K562 (cell line): ENCODE measurements at regions of chr6 and their contacts with region 1.

Region 1: GRCh38 chr6:158047127-158047518 is 65.5 kb downstream of the SYNJ2 start:
- DNase-seq: no peak
- ATAC-seq: no peak
- H3K4me3 ChIP-seq: no peak overlapping the region
- H3K27ac ChIP-seq: no peak overlapping the region
- H3K4me1 ChIP-seq: peaks cover 24 to 35% of the 10 kb centered on the region in 2 experiments
- H3K27me3 ChIP-seq: no peaks in the 10 kb centered on the region
- CTCF ChIP-seq: no peak
- EP300 ChIP-seq: no peak
- POLR2A ChIP-seq: no peak
- RAD21 ChIP-seq: no peak

Region 2: GRCh38 chr6:157999103-158000051 is 47.7 kb before region 1 on chr6:
- CTCF ChIA-PET with region 1: no interaction called
- POLR2A ChIA-PET with region 1: no interaction called
- in situ Hi-C with region 1: no loop called
- intact Hi-C with region 1: no loop called
- DNase-seq: no peak
- ATAC-seq: peak; percentile 15; the same call in 1 of the 3 replicates
- H3K4me3 ChIP-seq: no peak overlapping the region
- H3K27ac ChIP-seq: no peak overlapping the region
- H3K4me1 ChIP-seq: peaks cover 23 to 49% of the 10 kb centered on the region in 2 experiments
- H3K27me3 ChIP-seq: no peaks in the 10 kb centered on the region
- CTCF ChIP-seq: no peak
- EP300 ChIP-seq: no peak
- POLR2A ChIP-seq: no peak
- RAD21 ChIP-seq: no peak

Region 3: GRCh38 chr6:158060455-158061360 is 13.6 kb after region 1 on chr6:
- CTCF ChIA-PET with region 1: no interaction called
- POLR2A ChIA-PET with region 1: interaction called, 28 read pairs
- in situ Hi-C with region 1: no loop called
- intact Hi-C with region 1: no loop called
- DNase-seq: no peak
- ATAC-seq: no peak
- H3K4me3 ChIP-seq: no peak overlapping the region
- H3K27ac ChIP-seq: no peak overlapping the region
- H3K4me1 ChIP-seq: peaks cover 0 to 19% of the 10 kb centered on the region in 2 experiments; a peak in 1 of 5 replicates
- H3K27me3 ChIP-seq: no peaks in the 10 kb centered on the region
- CTCF ChIP-seq: no peak
- EP300 ChIP-seq: no peak
- POLR2A ChIP-seq: no peak
- RAD21 ChIP-seq: no peak